Activated CD8-positive, alpha-beta memory T cell treated with anti-CD3 and anti-CD28 coated beads, Interleukin-2, amount 10 ng/mL, durations not matched to agents 7 days and 5 days (primary cell): ENCODE measurements at regions of chr19 and their contacts with region 1.

Region 1: DNA sequence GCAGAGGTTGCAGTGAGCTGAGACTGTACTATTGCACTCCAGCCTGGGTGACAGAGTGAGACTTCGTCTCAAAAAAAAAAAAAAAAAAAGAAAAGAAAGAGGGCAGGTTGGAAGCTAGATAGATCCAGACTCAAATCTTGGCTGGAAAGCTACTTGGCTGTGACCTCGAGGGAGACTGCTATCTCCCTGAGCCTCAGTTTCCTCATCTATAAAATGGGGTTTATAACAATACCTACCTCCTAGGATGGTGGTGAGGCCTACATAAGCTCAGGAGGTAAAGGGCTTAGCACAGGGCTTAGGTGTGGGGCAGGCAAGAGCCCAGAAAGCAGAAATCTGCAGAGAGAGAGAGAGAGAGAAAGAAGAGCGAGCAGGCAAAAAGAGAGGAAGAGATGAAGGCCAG is 24.2 kb upstream of the DACT3 start:
- DNase-seq: no peak
- ATAC-seq: no peak
- H3K4me3 Mint-ChIP-seq: no peak overlapping the region
- H3K27ac Mint-ChIP-seq: peak overlapping the region; percentile 32
- H3K4me1 Mint-ChIP-seq: no peaks in the 10 kb centered on the region
- H3K27me3 Mint-ChIP-seq: no peaks in the 10 kb centered on the region

Region 2: GRCh38 chr19:46542428-46543230 is 142.6 kb before region 1 on chr19:
- CTCF ChIA-PET with region 1: no interaction called
- DNase-seq: peak; percentile 87
- ATAC-seq: peak; percentile 45
- H3K4me3 Mint-ChIP-seq: no peak overlapping the region
- H3K27ac Mint-ChIP-seq: no peak overlapping the region
- H3K4me1 Mint-ChIP-seq: no peaks in the 10 kb centered on the region
- H3K27me3 Mint-ChIP-seq: peaks cover 17% of the 10 kb centered on the region

Region 3: DNA sequence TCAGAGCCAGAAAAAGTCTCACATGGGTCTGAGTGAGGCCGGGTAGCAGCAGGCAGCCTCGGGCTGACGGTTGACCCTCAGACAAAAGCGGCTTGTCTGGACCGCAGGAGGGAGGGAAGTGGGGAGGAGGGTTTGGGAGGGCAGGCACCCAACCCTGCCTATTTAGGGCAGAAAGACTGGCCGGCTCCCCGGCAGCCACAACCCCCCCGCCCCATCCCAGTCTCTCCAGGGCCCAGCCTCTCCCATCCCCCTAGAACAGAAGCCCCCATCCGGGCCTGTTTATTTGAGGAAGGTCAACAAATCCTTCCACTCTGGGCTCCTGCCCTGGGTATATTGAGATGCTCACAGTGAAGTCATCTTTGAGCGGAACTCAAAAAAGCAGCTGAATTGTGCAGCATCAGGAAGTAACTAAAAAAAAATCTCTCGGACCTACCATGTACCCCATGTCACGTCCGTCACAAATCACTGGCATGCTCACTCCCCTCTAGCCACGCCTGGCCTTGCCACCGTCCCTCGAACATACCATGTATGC is 30.5 kb before region 1 on chr19:
- CTCF ChIA-PET with region 1: no interaction called
- DNase-seq: no peak
- ATAC-seq: no peak
- H3K4me3 Mint-ChIP-seq: no peak overlapping the region
- H3K27ac Mint-ChIP-seq: no peak overlapping the region
- H3K4me1 Mint-ChIP-seq: peaks cover 5% of the 10 kb centered on the region
- H3K27me3 Mint-ChIP-seq: peaks cover 56% of the 10 kb centered on the region

Region 4: GRCh38 chr19:46704379-46705076 is 19.3 kb after region 1 on chr19:
- CTCF ChIA-PET with region 1: interaction called, 12 read pairs
- DNase-seq: peak; percentile 90
- ATAC-seq: peak; percentile 88
- H3K4me3 Mint-ChIP-seq: no peak overlapping the region
- H3K27ac Mint-ChIP-seq: peak overlapping the region; percentile 67
- H3K4me1 Mint-ChIP-seq: peaks cover 6% of the 10 kb centered on the region
- H3K27me3 Mint-ChIP-seq: no peaks in the 10 kb centered on the region